ENCODE measurements at regions of chr6 and their contacts with region 1.

Region 1: GRCh38 chr6:79949233-79949632 is 1.9 kb upstream of the ELOVL4 start:
- DNase-seq: peak; percentile 64
- H3K4me3 ChIP-seq: no peak overlapping the region
- H3K27ac ChIP-seq: no peak overlapping the region
- H3K4me1 ChIP-seq: peaks cover 0 to 22% (median 16%) of the 10 kb centered on the region in 4 donors
- H3K27me3 ChIP-seq: peaks cover 38% of the 10 kb centered on the region
- CTCF ChIP-seq: peak in 4 of 5 experiments; percentile 21 to 55 (median 54)
- EP300 ChIP-seq: no peak
- POLR2A ChIP-seq: no peak

Region 2: DNA sequence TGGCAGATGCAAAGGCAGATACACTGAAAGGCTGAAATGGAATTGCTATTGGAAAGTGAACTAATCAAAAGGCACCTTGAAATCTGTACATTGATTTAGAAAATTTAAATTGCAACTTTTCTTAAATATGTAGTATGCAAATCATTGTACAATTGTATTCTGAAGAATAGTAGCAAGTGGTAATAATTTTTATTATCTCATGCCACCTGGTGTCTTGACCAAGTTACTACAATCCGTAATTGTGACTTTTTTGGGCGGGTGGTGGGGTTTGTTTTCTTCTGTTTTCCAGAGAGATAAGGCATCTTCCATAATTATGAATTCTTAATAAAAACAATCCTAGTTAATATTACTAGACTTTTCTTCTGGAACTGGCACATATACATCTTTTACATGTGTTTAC is 144.8 kb after region 1 on chr6:
- in situ Hi-C with region 1: loop called in 1 of 4 experiments (anchors 10 kb)
- intact Hi-C with region 1: no loop called
- DNase-seq: no peak
- H3K4me3 ChIP-seq: no peak overlapping the region
- H3K27ac ChIP-seq: no peak overlapping the region
- H3K4me1 ChIP-seq: no peaks in the 10 kb centered on the region
- H3K27me3 ChIP-seq: no peaks in the 10 kb centered on the region
- CTCF ChIP-seq: peak; percentile 48 to 60 (median 54)
- EP300 ChIP-seq: no peak
- POLR2A ChIP-seq: no peak

Measured in transverse colon (tissue), 4 donors.